PC-9 (cell line): ENCODE measurements at regions of chr19 and their contacts with region 1.

Region 1: GRCh38 chr19:12789904-12790619 is 1.2 kb upstream of the JUNB start:
- DNase-seq: peak; percentile 92 to 98
- H3K4me3 ChIP-seq: peak overlapping the region; percentile 73; the same call in 1 of the 2 replicates
- H3K27ac ChIP-seq: peak overlapping the region; percentile 86
- H3K4me1 ChIP-seq: peaks cover 61% of the 10 kb centered on the region
- H3K27me3 ChIP-seq: no peaks in the 10 kb centered on the region
- CTCF ChIP-seq: no peak

Region 2: GRCh38 chr19:12687496-12688196 is 102.4 kb before region 1 on chr19 and contains the start of gene GNG14:
- CTCF ChIA-PET with region 1: interaction called, 10 read pairs
- POLR2A ChIA-PET with region 1: no interaction called
- intact Hi-C with region 1: no loop called
- DNase-seq: no peak
- H3K4me3 ChIP-seq: no peak within 1 kb of the TSS
- H3K27ac ChIP-seq: no peak within 1 kb of the TSS
- H3K4me1 ChIP-seq: no peaks in the 10 kb centered on the region
- H3K27me3 ChIP-seq: no peaks in the 10 kb centered on the region
- CTCF ChIP-seq: no peak
- total RNA-seq, gene GNG14: not detected in 2 replicates

Region 3: DNA sequence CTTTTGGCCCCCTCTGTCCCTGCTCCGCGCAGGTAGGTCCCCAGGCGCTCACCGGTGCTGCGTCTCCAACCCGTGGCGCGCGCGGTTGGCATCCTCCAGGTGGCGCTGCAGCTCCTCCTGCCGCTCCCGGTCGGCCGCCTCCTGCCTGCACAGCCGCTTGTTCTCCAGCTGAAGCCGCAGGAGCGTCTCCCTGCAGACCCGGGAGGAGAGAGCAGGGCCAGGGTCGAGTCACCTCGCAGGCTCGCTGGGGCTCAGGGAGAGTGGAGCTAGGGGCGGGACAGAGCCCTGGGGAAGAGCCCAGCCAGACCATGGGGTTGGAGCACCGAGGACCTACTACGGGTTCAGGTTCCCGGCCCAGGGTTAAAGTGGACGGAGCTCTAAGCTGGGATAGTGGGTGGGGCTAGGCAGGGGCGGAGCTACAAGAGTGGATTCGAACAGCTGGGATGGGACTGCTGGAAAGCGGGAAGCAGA is 24.0 kb before region 1 on chr19:
- CTCF ChIA-PET with region 1: interaction called, 14 read pairs
- POLR2A ChIA-PET with region 1: interaction called, 38 read pairs
- intact Hi-C with region 1: no loop called
- DNase-seq: peak; percentile 59 to 85
- H3K4me3 ChIP-seq: peak overlapping the region; percentile 25; the same call in 1 of the 2 replicates
- H3K27ac ChIP-seq: no peak overlapping the region
- H3K4me1 ChIP-seq: no peaks in the 10 kb centered on the region
- H3K27me3 ChIP-seq: no peaks in the 10 kb centered on the region
- CTCF ChIP-seq: peak; percentile 85

Region 4: DNA sequence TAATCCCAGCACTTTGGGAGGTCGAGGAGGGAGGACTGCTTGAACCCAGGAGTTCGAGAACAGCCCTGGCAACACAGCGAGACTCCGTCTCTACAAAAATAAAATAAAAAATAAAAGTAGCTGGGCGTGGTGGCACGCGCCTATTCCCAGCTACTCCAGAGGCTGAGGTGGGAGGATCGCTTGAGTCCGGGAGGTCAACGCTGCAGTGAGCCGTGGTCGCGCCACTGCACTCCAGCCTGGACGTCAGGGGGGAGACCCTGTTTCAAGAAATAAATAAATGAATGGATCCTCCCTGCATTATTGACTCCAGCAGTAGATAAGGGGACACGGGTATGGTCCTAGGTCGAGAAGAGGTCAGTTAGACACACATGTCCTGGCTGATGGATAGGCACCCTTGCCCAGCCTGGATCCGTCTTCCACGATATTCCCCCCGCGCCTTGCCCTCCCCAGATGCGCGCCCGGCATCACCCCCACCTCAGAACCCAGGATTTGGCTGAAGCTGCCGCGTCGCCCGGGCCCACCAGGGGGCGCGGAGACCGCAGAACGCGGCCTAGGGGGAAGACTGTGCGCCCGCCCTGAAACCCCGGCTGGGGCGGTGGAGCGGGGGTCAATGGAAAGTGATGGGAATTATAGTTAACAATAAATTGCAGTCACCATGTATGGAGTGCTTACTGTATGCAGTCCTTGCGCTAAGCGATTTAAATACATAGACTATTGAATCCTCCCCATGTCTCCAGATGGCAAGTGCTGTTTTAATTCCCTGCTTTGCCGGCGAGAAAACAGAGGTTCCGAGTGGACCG is 12.6 kb before region 1 on chr19:
- CTCF ChIA-PET with region 1: interaction called, 11 read pairs
- POLR2A ChIA-PET with region 1: interaction called, 59 read pairs
- intact Hi-C with region 1: no loop called
- DNase-seq: peak; percentile 63 to 85
- H3K4me3 ChIP-seq: peak overlapping the region; percentile 59
- H3K27ac ChIP-seq: peak overlapping the region; percentile 51
- H3K4me1 ChIP-seq: peaks cover 54% of the 10 kb centered on the region
- H3K27me3 ChIP-seq: no peaks in the 10 kb centered on the region
- CTCF ChIP-seq: peak; percentile 99

Region 5: DNA sequence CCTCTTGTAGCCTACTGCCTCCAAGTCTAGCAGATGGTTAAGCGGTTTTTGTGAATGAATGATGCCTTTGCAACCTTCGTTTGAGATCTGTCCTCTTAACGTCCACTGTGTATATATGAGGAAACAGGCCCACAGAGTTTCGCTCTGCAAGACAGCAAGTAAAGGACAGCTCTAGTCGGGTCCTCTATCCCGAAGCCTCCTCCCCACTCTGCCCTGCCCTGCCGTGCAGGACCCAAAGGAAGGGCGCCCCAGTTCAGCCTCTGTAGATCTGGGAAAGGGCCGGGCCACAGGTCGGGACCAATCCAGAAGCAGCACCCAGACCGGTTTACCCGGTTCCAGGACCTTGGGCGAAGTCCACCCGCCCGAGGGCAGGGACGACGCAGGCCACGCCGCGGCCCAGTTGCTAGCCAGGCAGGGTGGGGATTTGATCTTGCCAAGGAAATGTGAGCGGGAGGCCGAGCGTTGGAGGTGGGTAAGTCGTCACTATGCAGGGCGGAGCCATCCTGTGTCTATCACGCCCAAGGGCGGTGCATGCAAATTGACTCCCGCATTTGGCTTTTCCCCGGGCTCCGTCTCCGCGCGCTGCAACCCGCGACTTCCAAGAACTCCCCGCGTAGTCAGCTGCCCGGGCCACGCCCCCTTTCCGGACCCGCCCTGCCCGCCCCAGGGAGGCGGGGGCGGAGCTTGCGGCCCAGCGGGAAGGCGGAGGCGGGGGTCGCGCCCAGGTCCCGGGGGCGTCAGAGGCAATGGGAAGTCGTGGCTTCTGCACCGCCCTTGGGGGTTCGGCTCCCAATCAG is 372.7 kb after region 1 on chr19:
- CTCF ChIA-PET with region 1: no interaction called
- POLR2A ChIA-PET with region 1: no interaction called
- intact Hi-C with region 1: loop called (anchors 5 kb)
- DNase-seq: peak; percentile 99
- H3K4me3 ChIP-seq: peak overlapping the region; percentile 63
- H3K27ac ChIP-seq: peak overlapping the region; percentile 99
- H3K4me1 ChIP-seq: peaks cover 66% of the 10 kb centered on the region
- H3K27me3 ChIP-seq: no peaks in the 10 kb centered on the region
- CTCF ChIP-seq: peak; percentile 27

Region 6: DNA sequence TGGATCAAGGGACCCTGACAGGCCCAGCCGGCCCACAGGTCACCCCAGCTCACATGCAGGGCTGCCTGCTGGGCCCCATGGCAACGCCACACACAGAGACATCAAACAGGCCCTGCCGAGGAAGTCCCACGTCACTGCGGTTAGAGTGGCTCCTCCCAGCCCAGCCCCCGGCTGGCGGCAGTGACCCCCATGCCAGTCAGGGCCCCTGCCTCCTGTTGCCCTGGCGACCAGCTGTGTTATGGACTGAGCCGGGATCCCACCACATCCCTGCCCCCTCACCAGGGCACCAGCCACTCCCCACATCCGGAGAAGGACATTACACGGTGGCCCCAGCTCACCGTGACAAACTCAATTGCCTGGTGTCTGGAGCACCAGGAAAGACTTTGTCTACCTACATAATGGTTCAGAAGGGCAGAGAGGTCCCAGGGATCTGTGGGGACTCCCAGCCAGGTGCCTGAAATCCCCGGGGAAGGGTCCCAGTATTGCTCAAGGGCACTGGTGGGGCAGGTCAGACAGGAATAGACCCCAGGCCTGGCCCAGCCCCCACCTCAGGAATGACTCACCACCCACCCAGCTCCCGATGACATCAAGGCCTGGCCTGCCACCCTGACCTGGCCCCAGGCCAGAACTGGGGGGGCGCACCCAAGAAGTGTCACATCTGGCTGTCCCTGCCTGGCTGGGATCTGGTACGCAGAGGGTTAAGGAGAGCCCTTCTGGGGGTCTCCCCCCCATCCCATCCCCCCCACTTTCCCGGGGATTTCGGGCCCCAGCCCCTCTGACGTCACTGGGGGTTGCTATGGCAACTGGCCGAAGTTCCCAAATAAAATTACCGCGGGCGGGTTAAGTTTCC is 1056.7 kb after region 1 on chr19:
- CTCF ChIA-PET with region 1: no interaction called
- POLR2A ChIA-PET with region 1: no interaction called
- intact Hi-C with region 1: loop called (anchors 10 kb)
- DNase-seq: peak; percentile 93 to 97
- H3K4me3 ChIP-seq: peak overlapping the region; percentile 77
- H3K27ac ChIP-seq: peak overlapping the region; percentile 97
- H3K4me1 ChIP-seq: peaks cover 70% of the 10 kb centered on the region
- H3K27me3 ChIP-seq: no peaks in the 10 kb centered on the region
- CTCF ChIP-seq: no peak